ENCODE measurements at regions of chr20 and their contacts with region 1.

Region 1: GRCh38 chr20:49063279-49063678 is 17.2 kb downstream of the CSE1L start:
- DNase-seq: no peak
- ATAC-seq: no peak
- H3K4me3 Mint-ChIP-seq: no peak overlapping the region
- H3K27ac Mint-ChIP-seq: no peak overlapping the region
- H3K4me1 Mint-ChIP-seq: no peaks in the 10 kb centered on the region
- H3K27me3 Mint-ChIP-seq: no peaks in the 10 kb centered on the region
- CTCF ChIP-seq: no peak

Region 2: GRCh38 chr20:48411141-48411618 is 652.1 kb before region 1 on chr20:
- CTCF ChIA-PET with region 1: no interaction called
- POLR2A ChIA-PET with region 1: no interaction called
- intact Hi-C with region 1: no loop called
- DNase-seq: no peak
- ATAC-seq: no peak
- H3K4me3 Mint-ChIP-seq: no peak overlapping the region
- H3K27ac Mint-ChIP-seq: no peak overlapping the region
- H3K4me1 Mint-ChIP-seq: peaks cover 2% of the 10 kb centered on the region
- H3K27me3 Mint-ChIP-seq: peaks cover 21% of the 10 kb centered on the region
- CTCF ChIP-seq: no peak

Region 3: GRCh38 chr20:49028684-49029083 is 34.6 kb before region 1 on chr20:
- CTCF ChIA-PET with region 1: no interaction called
- POLR2A ChIA-PET with region 1: no interaction called
- intact Hi-C with region 1: loop called (anchors 5 kb)
- DNase-seq: no peak
- ATAC-seq: no peak
- H3K4me3 Mint-ChIP-seq: no peak overlapping the region
- H3K27ac Mint-ChIP-seq: no peak overlapping the region
- H3K4me1 Mint-ChIP-seq: no peaks in the 10 kb centered on the region
- H3K27me3 Mint-ChIP-seq: no peaks in the 10 kb centered on the region
- CTCF ChIP-seq: no peak